ENCODE measurements at regions of chr22 and their contacts with region 1.

Region 1: GRCh38 chr22:45931042-45931441 is 45.9 kb downstream of the WNT7B start:
- DNase-seq: no peak
- H3K4me3 ChIP-seq: no peak overlapping the region
- H3K27ac ChIP-seq: no peak overlapping the region
- H3K4me1 ChIP-seq: no peaks in the 10 kb centered on the region
- H3K27me3 ChIP-seq: no peaks in the 10 kb centered on the region
- CTCF ChIP-seq: no peak
- POLR2A ChIP-seq: no peak

Region 2: GRCh38 chr22:45720839-45721378 is 210.1 kb before region 1 on chr22:
- intact Hi-C with region 1: no loop called
- DNase-seq: no peak
- H3K4me3 ChIP-seq: no peak overlapping the region
- H3K27ac ChIP-seq: no peak overlapping the region
- H3K4me1 ChIP-seq: no peaks in the 10 kb centered on the region
- H3K27me3 ChIP-seq: no peaks in the 10 kb centered on the region
- CTCF ChIP-seq: no peak
- POLR2A ChIP-seq: no peak

Region 3: DNA sequence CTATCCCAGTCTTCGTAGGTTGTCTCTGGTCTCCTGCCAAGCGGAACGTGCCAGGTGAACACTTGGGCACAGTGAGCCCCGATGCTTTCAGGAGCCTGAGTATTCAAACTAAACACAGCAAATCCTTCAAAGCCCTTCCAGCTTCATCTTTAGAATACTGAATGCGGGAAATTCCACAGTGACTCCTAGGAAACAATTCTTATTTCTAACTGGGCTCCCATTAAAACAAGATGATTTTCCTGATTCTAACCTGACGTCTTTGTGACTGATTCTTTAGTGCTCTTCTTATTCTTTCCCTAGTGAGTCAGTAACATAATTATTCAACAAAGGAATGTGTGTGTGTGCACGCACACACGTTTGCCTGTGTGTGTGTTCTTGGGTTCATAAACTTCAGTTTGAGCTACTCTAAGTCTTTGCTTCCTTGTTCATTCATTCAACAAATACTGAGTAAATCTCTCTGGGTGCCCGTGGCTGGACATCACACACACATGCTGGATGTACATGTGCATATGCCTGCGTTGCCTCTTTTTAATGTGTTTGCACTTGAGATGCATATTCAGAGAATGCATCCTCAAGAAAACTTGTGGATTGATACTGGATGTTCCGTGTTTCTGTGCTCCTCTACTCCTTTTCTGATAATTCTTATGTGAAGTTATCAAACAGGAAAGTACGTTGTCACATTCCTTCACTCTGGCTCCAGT is 88.6 kb before region 1 on chr22:
- intact Hi-C with region 1: no loop called
- DNase-seq: no peak
- H3K4me3 ChIP-seq: no peak overlapping the region
- H3K27ac ChIP-seq: no peak overlapping the region
- H3K4me1 ChIP-seq: peaks cover 4% of the 10 kb centered on the region
- H3K27me3 ChIP-seq: no peaks in the 10 kb centered on the region
- CTCF ChIP-seq: no peak
- POLR2A ChIP-seq: no peak

Region 4: DNA sequence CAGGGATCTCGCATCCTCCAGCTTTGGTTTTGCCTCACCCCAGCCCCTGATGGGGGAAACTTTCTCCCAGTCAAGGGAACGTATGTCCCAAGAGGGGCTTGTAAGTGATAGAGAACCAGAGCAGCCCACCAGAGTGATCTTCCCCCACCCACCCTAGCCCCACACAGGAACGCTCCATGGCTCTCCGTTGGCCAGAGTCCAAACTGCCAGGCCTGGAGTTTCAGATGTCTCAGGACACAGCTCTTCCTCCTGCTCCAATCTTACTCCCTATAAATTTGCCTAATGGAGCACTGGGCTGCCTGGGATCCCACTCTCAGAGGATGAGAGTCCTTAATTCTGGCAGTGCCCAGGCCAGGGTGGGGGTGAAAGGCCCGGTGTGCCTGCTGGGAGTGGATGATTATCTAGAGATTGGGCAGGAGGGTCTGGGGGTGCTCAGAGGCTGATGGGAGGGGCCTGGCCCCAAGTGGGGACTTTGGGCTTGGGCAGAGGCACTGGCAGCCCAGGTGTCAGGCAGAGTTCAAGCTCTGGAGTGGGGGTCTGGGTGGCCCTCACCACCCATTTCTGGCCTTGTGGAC is 34.0 kb before region 1 on chr22:
- intact Hi-C with region 1: loop called (anchors 1 kb)
- DNase-seq: no peak
- H3K4me3 ChIP-seq: no peak overlapping the region
- H3K27ac ChIP-seq: no peak overlapping the region
- H3K4me1 ChIP-seq: no peaks in the 10 kb centered on the region
- H3K27me3 ChIP-seq: no peaks in the 10 kb centered on the region
- CTCF ChIP-seq: no peak
- POLR2A ChIP-seq: no peak

Measured in testis (tissue), 5 donors.